Gastrocnemius medialis (tissue), 4 donors: ENCODE measurements at regions of chr3 and their contacts with region 1.

Region 1: GRCh38 chr3:128095222-128095703 is 28.3 kb downstream of the RUVBL1 start:
- DNase-seq: peak in 1 of 2 donors; percentile 72
- ATAC-seq: peak; percentile 81 to 95
- H3K4me3 ChIP-seq: no peak overlapping the region
- H3K27ac ChIP-seq: no peak overlapping the region
- H3K4me1 ChIP-seq: peaks cover 0 to 4% of the 10 kb centered on the region in 2 donors
- H3K27me3 ChIP-seq: no peaks in the 10 kb centered on the region
- CTCF ChIP-seq: peak; percentile 68 to 81 (median 78)
- POLR2A ChIP-seq: no peak

Region 2: DNA sequence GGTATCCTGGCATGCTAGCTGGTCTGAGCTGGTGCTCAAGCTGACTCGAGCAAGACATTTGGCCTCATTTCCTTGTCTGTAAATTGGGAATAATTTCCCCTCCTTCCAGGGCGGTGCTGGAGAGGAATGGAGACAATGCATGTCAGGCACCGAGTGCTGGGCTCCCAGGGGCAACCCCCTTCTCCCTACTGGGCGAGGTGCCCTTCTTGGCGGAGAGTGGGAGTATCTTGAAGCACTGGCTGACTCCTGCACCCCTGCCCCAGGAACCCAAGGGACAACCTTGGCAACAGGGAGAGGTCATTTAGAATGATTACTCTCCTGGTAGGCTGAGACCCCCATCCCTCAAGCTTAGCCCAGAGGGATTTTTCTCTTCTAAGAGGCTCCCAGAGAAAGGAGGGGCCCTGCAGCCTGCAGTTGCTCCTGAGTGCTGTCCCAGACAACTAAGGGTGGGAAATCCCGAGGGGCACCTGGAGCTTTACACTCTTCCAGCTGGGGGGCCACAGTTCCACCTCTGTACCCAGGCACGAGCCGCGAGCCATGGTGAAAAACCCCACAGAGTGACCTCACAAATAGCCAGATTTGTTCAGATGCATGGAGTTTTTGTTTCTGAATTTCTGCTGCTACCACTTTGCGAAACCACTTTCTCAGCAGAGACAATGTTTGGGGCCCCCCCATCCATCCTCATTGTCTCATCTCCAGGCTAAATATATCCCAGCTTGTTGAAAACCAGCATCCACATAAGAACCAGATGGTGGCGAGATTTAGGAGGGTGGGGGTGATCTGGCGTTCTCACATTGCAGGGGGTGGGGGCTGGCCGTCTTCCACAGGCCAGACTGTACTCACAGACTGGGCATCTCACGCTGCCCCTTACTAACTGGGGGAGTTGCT is 377.7 kb before region 1 on chr3:
- in situ Hi-C with region 1: no loop called
- intact Hi-C with region 1: no loop called
- DNase-seq: no peak
- ATAC-seq: no peak
- H3K4me3 ChIP-seq: no peak overlapping the region
- H3K27ac ChIP-seq: peak overlapping the region; percentile 5 to 71 (median 42)
- H3K4me1 ChIP-seq: peaks cover 18 to 57% of the 10 kb centered on the region in 2 donors
- H3K27me3 ChIP-seq: no peaks in the 10 kb centered on the region
- CTCF ChIP-seq: no peak
- POLR2A ChIP-seq: no peak

Region 3: GRCh38 chr3:128133273-128134084 is 38.2 kb after region 1 on chr3:
- in situ Hi-C with region 1: no loop called
- intact Hi-C with region 1: loop called (anchors 5 kb)
- DNase-seq: no peak
- ATAC-seq: no peak
- H3K4me3 ChIP-seq: no peak overlapping the region
- H3K27ac ChIP-seq: no peak overlapping the region
- H3K4me1 ChIP-seq: no peaks in the 10 kb centered on the region
- H3K27me3 ChIP-seq: peaks cover 0 to 6% (median 0%) of the 10 kb centered on the region in 3 donors
- CTCF ChIP-seq: peak in 2 of 5 experiments; percentile 34 to 37
- POLR2A ChIP-seq: no peak

Region 4: GRCh38 chr3:128322066-128323022 is 227.1 kb after region 1 on chr3:
- in situ Hi-C with region 1: no loop called
- intact Hi-C with region 1: loop called (anchors 10 kb)
- DNase-seq: peak; percentile 22 to 44
- ATAC-seq: no peak
- H3K4me3 ChIP-seq: no peak overlapping the region
- H3K27ac ChIP-seq: no peak overlapping the region
- H3K4me1 ChIP-seq: peaks cover 7 to 21% of the 10 kb centered on the region in 2 donors
- H3K27me3 ChIP-seq: no peaks in the 10 kb centered on the region
- CTCF ChIP-seq: peak; percentile 12 to 63 (median 56)
- POLR2A ChIP-seq: no peak

Region 5: GRCh38 chr3:128503164-128503651 is 407.9 kb after region 1 on chr3:
- in situ Hi-C with region 1: loop called (anchors 10 to 25 kb)
- intact Hi-C with region 1: no loop called
- DNase-seq: no peak
- ATAC-seq: no peak
- H3K4me3 ChIP-seq: no peak overlapping the region
- H3K27ac ChIP-seq: no peak overlapping the region
- H3K4me1 ChIP-seq: no peaks in the 10 kb centered on the region
- H3K27me3 ChIP-seq: peaks cover 19 to 24% (median 23%) of the 10 kb centered on the region in 3 donors
- CTCF ChIP-seq: no peak
- POLR2A ChIP-seq: no peak

Region 6: GRCh38 chr3:128603811-128604775 is 508.8 kb after region 1 on chr3:
- in situ Hi-C with region 1: loop called in 2 of 4 experiments (anchors 25 kb)
- intact Hi-C with region 1: loop called (anchors 1 kb)
- DNase-seq: no peak
- ATAC-seq: no peak
- H3K4me3 ChIP-seq: no peak overlapping the region
- H3K27ac ChIP-seq: no peak overlapping the region
- H3K4me1 ChIP-seq: peaks cover 7 to 13% of the 10 kb centered on the region in 2 donors
- H3K27me3 ChIP-seq: no peaks in the 10 kb centered on the region
- CTCF ChIP-seq: no peak
- POLR2A ChIP-seq: no peak